PC-3 (cell line): ENCODE measurements at regions of chr1 and their contacts with region 1.

Region 1: DNA sequence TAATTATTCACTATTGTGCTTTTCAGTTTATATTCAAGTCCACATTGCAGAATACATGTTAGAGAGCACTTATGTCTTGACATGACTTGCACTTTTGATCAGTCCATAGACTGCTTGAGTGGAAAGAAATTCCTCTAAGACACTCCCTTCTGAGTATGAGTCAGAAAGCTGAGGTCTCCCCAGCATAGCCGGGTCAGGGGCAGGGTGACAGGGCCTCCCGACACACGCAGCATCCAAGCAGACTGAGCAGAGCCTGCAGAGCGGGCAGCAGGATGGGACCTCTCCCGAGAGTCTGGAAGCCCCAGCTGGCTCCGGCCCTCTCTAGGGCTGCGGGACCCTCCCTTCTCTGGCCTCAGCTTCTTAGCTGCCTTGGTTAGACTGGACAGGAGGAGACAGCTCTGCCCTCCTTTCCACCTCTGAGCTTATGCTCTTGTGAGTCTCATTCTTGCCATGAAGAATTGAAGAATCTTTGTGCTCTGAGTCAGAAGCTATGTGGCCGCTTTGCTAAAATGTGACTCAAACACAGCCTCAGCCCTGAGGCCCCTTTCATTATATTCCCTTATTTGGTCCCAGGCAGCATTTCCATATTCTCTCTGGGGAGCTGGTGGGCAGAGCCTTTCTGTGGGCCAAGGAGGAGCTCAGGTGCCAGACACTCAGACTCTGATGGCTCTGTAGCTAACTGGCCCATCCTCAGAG is 11.2 kb upstream of the CAPN2 start:
- DNase-seq: peak; percentile 99
- ATAC-seq: peak; percentile 76
- H3K4me3 ChIP-seq: peak overlapping the region; percentile 60
- H3K27ac ChIP-seq: peak overlapping the region; percentile 97
- H3K4me1 ChIP-seq: peaks cover 73% of the 10 kb centered on the region
- H3K27me3 ChIP-seq: no peaks in the 10 kb centered on the region
- CTCF ChIP-seq: no peak

Region 2: GRCh38 chr1:223556414-223557129 is 144.5 kb before region 1 on chr1:
- CTCF ChIA-PET with region 1: no interaction called
- POLR2A ChIA-PET with region 1: no interaction called
- intact Hi-C with region 1: no loop called
- DNase-seq: peak; percentile 90
- ATAC-seq: peak; percentile 97
- H3K4me3 ChIP-seq: no peak overlapping the region
- H3K27ac ChIP-seq: no peak overlapping the region
- H3K4me1 ChIP-seq: no peaks in the 10 kb centered on the region
- H3K27me3 ChIP-seq: no peaks in the 10 kb centered on the region
- CTCF ChIP-seq: peak; percentile 98

Region 3: GRCh38 chr1:223732992-223733798 is 32.1 kb after region 1 on chr1:
- CTCF ChIA-PET with region 1: no interaction called
- POLR2A ChIA-PET with region 1: interaction called, 4 read pairs
- intact Hi-C with region 1: loop called (anchors 2 kb)
- DNase-seq: peak; percentile 94
- ATAC-seq: peak; percentile 59
- H3K4me3 ChIP-seq: 0 out of 2 replicates have a peak overlapping the region, but pooled peaks have one; percentile 5
- H3K27ac ChIP-seq: peak overlapping the region; percentile 88
- H3K4me1 ChIP-seq: peaks cover 68% of the 10 kb centered on the region
- H3K27me3 ChIP-seq: no peaks in the 10 kb centered on the region
- CTCF ChIP-seq: no peak

Region 4: DNA sequence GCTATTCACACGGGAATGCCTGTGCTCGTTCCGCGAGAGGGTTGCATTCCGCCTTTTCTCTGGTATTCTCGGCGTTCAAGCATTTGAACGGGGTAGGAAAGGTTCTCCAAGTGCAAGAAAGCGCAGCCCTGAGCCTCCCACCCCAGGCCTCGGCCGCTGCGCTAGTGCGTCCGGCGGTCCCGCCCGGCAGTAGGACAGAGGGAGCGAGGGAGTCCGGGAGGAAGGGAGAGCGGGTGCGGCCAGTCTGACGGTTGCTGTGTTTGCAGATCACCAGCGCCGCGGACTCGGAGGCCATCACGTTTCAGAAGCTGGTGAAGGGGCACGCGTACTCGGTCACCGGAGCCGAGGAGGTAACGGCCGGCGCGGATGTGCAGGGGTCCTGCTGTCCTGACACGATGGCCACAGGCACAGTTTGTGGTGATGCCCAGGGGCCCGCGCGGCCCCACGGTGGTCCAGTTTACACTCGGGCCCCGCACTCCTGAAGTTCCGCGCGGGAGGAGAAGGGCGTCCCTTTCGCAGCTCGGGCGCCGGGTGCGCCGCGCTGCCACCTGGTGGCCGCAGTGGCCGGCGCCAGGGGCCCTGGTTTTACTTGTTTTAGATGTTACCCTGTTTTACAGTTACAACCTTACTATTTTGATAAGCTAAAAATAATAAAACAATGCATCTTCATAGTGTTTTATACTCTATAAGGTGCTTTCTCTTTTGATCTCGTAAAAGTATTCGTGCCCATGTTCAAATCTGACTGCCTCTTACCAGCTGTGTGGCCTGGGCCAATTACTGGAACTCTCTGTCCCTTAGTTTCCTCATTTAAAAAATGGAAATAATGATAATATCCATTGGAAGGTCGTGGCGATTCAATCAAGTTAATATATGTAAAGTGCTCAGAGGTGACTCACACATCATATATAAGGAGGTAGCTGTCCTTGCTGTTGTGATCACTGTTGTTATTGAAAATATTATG is 48.0 kb after region 1 on chr1:
- CTCF ChIA-PET with region 1: interaction called, 4 read pairs
- POLR2A ChIA-PET with region 1: interaction called, 4 read pairs
- intact Hi-C with region 1: loop called (anchors 1 kb)
- DNase-seq: peak; percentile 56
- ATAC-seq: peak; percentile 25
- H3K4me3 ChIP-seq: no peak overlapping the region
- H3K27ac ChIP-seq: peak overlapping the region; percentile 69
- H3K4me1 ChIP-seq: peaks cover 22% of the 10 kb centered on the region
- H3K27me3 ChIP-seq: no peaks in the 10 kb centered on the region
- CTCF ChIP-seq: peak; percentile 95

Region 5: GRCh38 chr1:223811634-223812415 is 110.7 kb after region 1 on chr1:
- CTCF ChIA-PET with region 1: interaction called, 3 read pairs
- POLR2A ChIA-PET with region 1: no interaction called
- intact Hi-C with region 1: loop called (anchors 1 kb)
- DNase-seq: peak; percentile 79
- ATAC-seq: peak; percentile 61
- H3K4me3 ChIP-seq: no peak overlapping the region
- H3K27ac ChIP-seq: no peak overlapping the region
- H3K4me1 ChIP-seq: peaks cover 28% of the 10 kb centered on the region
- H3K27me3 ChIP-seq: no peaks in the 10 kb centered on the region
- CTCF ChIP-seq: peak; percentile 85

Region 6: GRCh38 chr1:224736619-224737352 is 1035.7 kb after region 1 on chr1:
- CTCF ChIA-PET with region 1: no interaction called
- POLR2A ChIA-PET with region 1: no interaction called
- intact Hi-C with region 1: no loop called
- DNase-seq: no peak
- ATAC-seq: no peak
- H3K4me3 ChIP-seq: no peak overlapping the region
- H3K27ac ChIP-seq: no peak overlapping the region
- H3K4me1 ChIP-seq: peaks cover 24% of the 10 kb centered on the region
- H3K27me3 ChIP-seq: no peaks in the 10 kb centered on the region
- CTCF ChIP-seq: no peak